MCF 10A (cell line): ENCODE measurements at regions of chr6 and their contacts with region 1.

Region 1: GRCh38 chr6:27230758-27231111 is 16.8 kb upstream of the PRSS16 start:
- DNase-seq: peak; percentile 55
- H3K4me3 Mint-ChIP-seq: peak overlapping the region; percentile 66
- H3K27ac Mint-ChIP-seq: peak overlapping the region; percentile 11
- H3K4me1 Mint-ChIP-seq: peaks cover 6% of the 10 kb centered on the region
- H3K27me3 Mint-ChIP-seq: no peaks in the 10 kb centered on the region
- CTCF ChIP-seq: no peak

Region 2: DNA sequence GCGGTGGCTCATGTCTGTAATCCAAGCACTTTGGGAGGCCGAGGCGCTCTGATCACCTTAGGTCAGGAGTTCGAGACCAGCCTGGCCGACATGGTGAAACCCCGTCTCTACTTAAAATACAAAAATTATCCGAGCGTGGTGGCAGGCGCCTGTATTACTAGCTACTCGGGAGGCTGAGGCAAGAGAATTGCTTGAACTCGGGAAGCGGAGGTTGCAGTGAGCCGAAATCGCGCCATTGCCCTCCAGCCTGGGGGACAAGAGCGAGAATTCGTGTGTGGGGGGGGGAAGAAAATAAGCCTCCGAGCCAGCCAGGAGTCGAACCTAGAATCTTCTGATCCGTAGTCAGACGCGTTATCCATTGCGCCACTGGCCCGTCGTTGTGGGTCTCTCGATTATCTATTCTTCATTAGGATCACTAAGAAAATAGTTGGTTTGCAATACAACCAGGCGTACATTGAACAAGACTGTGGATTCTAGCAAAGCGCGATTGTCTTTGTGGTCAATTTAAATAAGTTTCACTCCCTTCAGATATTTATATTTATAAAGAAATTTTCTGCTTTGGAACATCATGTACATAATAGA is 17.1 kb before region 1 on chr6:
- CTCF ChIA-PET with region 1: interaction called, 3 read pairs
- POLR2A ChIA-PET with region 1: interaction called, 3 read pairs
- intact Hi-C with region 1: loop called (anchors 2 kb)
- DNase-seq: peak; percentile 68
- H3K4me3 Mint-ChIP-seq: peak overlapping the region; percentile 88
- H3K27ac Mint-ChIP-seq: no peak overlapping the region
- H3K4me1 Mint-ChIP-seq: no peaks in the 10 kb centered on the region
- H3K27me3 Mint-ChIP-seq: no peaks in the 10 kb centered on the region
- CTCF ChIP-seq: no peak

Region 3: DNA sequence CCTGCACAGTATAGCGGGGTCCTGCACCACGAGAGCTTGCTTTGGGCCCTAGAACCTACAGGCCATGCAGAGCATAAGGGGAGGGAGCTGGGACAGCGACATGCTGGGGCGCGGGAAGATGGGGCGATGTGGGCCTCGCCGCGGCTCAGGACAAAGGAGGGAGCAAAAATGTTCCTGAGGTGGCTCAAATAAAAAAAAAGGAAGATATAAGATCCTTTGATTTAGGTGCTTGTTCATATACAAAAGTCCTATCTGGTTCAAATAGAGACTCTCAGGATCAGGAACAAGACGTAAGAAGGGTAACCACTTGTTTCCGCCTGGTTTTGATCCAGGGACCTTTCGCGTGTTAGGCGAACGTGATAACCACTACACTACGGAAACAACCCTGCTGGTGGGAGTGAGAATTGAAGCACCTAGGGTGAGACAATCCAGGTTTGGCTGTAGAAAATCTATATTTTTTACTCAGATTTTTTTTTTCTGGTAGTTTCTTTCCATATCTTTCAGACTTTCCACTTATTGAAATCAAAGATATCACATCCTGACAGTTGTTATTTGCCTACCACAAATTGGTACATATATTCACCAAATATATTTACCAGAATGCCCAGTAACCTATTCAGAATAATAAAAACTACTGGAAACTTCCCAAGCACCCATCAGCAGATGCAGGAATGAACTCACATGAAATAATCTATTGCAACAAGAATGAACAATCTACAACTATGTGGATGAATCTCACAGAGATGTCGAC is 420.1 kb after region 1 on chr6:
- CTCF ChIA-PET with region 1: no interaction called
- POLR2A ChIA-PET with region 1: no interaction called
- intact Hi-C with region 1: no loop called
- DNase-seq: peak; percentile 83
- H3K4me3 Mint-ChIP-seq: peak overlapping the region; percentile 36
- H3K27ac Mint-ChIP-seq: no peak overlapping the region
- H3K4me1 Mint-ChIP-seq: peaks cover 6% of the 10 kb centered on the region
- H3K27me3 Mint-ChIP-seq: no peaks in the 10 kb centered on the region
- CTCF ChIP-seq: no peak